GM10248 (cell line): ENCODE measurements at regions of chr9 and their contacts with region 1.

Region 1: DNA sequence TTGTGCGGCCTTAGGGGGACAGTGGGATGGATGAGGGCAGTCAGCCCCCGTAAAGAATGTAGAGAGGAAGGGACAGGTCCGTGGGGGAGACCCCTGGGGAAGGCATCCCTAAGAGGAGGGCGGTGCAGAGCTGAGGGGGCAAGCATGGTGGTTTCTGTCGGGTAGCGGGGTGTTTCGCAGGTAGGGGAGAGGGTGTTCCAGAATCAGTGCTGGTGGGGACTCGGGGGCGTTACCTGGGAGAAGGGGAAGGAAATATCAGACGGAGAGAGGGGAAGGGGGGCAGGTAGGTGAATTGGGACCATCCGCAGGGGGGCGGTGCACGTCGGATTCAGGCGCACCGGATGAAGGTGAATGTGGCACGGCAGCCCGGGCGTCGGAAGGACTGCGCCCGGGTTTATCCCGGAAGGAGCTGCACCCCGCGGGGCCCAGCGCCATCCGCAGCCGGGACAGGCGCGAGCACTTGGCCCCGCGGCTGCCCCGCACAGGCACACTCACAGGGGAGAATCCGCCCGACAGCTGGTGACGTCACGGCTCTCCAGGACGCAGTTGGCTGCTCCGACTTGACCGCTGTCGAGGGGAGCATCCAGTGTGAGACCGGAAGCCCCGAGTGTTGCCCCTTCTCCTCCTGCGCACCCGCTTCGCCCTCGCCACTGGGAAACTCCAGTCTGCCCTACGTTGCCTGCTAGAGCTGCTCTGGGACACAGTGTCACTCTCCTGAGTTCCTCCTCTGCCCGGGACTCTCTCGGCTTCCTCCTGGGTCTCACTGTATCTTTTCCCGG is 1.3 kb downstream of the CD72 start:
- DNase-seq: peak; percentile 83
- CTCF ChIP-seq: peak; percentile 36

Region 2: GRCh38 chr9:35603987-35604577 is 12.8 kb before region 1 on chr9:
- CTCF ChIA-PET with region 1: interaction called, 53 read pairs
- POLR2A ChIA-PET with region 1: interaction called, 3 read pairs
- DNase-seq: peak; percentile 98
- CTCF ChIP-seq: peak; percentile 97

Region 3: DNA sequence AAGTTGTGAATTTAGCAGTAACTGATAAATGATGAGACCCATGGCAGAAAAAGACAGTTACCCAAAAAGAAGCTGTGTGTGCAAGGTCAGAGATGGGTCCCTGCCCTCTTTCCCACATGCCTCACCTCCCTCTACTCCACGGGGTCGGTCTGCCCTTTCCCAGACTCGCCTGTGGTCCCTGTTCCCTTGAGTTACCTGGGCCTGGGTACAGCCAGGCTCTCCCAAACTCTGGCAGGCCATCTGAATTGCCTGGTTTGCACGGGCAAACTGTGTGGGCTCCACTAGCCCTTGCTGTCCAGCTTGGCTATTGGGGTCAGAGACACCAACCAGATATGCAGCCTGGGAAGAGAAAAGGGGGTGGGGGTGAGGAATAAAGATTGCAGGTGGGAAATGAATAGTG is 91.3 kb after region 1 on chr9:
- CTCF ChIA-PET with region 1: no interaction called
- POLR2A ChIA-PET with region 1: interaction called, 11 read pairs
- DNase-seq: no peak
- CTCF ChIP-seq: no peak